Caco-2 (cell line): ENCODE measurements at regions of chr2 and their contacts with region 1.

Region 1: GRCh38 chr2:206159346-206160124 is at the starts of genes EEF1B2 and NDUFS1:
- DNase-seq: peak; percentile 98
- H3K4me3 ChIP-seq: peak within 1 kb of the TSS; percentile 70
- H3K4me3 Mint-ChIP-seq: peak within 1 kb of the TSS; percentile 83
- H3K27ac Mint-ChIP-seq: peak within 1 kb of the TSS; percentile 99
- H3K4me1 ChIP-seq: peaks cover 6% of the 10 kb centered on the region; the same call in 1 of the 2 replicates
- H3K4me1 Mint-ChIP-seq: peaks cover 25% of the 10 kb centered on the region
- H3K27me3 ChIP-seq: no peaks in the 10 kb centered on the region
- H3K27me3 Mint-ChIP-seq: no peaks in the 10 kb centered on the region
- CTCF ChIP-seq: no peak
- total RNA-seq, gene EEF1B2: 939 and 946 TPM in 2 replicates
- total RNA-seq, gene NDUFS1: 123 TPM in 2 replicates

Region 2: GRCh38 chr2:206004004-206004693 is 155.4 kb before region 1 on chr2:
- CTCF ChIA-PET with region 1: interaction called, 3 read pairs
- POLR2A ChIA-PET with region 1: no interaction called
- intact Hi-C with region 1: loop called (anchors 2 kb)
- DNase-seq: peak; percentile 65
- H3K4me3 ChIP-seq: no peak overlapping the region
- H3K4me3 Mint-ChIP-seq: no peak overlapping the region
- H3K27ac Mint-ChIP-seq: no peak overlapping the region
- H3K4me1 ChIP-seq: no peaks in the 10 kb centered on the region
- H3K4me1 Mint-ChIP-seq: no peaks in the 10 kb centered on the region
- H3K27me3 ChIP-seq: no peaks in the 10 kb centered on the region
- H3K27me3 Mint-ChIP-seq: no peaks in the 10 kb centered on the region
- CTCF ChIP-seq: peak; percentile 31 to 78

Region 3: GRCh38 chr2:206085742-206086445 is 73.6 kb before region 1 on chr2 and contains the start of gene INO80D:
- CTCF ChIA-PET with region 1: no interaction called
- POLR2A ChIA-PET with region 1: interaction called, 7 read pairs
- intact Hi-C with region 1: loop called (anchors 2 kb)
- DNase-seq: peak; percentile 87 to 88
- H3K4me3 ChIP-seq: peak within 1 kb of the TSS; percentile 77
- H3K4me3 Mint-ChIP-seq: peak within 1 kb of the TSS; percentile 93
- H3K27ac Mint-ChIP-seq: peak within 1 kb of the TSS; percentile 97
- H3K4me1 ChIP-seq: no peaks in the 10 kb centered on the region
- H3K4me1 Mint-ChIP-seq: peaks cover 18% of the 10 kb centered on the region
- H3K27me3 ChIP-seq: no peaks in the 10 kb centered on the region
- H3K27me3 Mint-ChIP-seq: no peaks in the 10 kb centered on the region
- CTCF ChIP-seq: peak; percentile 48 to 68
- total RNA-seq, gene INO80D: 19.8 and 21.8 TPM in 2 replicates

Region 4: GRCh38 chr2:206260188-206261012 is 100.9 kb after region 1 on chr2:
- CTCF ChIA-PET with region 1: interaction called, 4 read pairs
- POLR2A ChIA-PET with region 1: no interaction called
- intact Hi-C with region 1: loop called (anchors 1 kb)
- DNase-seq: peak in 1 of 2 experiments; percentile 26
- H3K4me3 ChIP-seq: no peak overlapping the region
- H3K4me3 Mint-ChIP-seq: no peak overlapping the region
- H3K27ac Mint-ChIP-seq: no peak overlapping the region
- H3K4me1 ChIP-seq: 0 out of 2 replicates have a peak, but pooled peaks cover 3% of the 10 kb centered on the region
- H3K4me1 Mint-ChIP-seq: no peaks in the 10 kb centered on the region
- H3K27me3 ChIP-seq: 0 out of 2 replicates have a peak, but pooled peaks cover 1% of the 10 kb centered on the region
- H3K27me3 Mint-ChIP-seq: peaks cover 37% of the 10 kb centered on the region
- CTCF ChIP-seq: peak; percentile 55 to 62

Region 5: DNA sequence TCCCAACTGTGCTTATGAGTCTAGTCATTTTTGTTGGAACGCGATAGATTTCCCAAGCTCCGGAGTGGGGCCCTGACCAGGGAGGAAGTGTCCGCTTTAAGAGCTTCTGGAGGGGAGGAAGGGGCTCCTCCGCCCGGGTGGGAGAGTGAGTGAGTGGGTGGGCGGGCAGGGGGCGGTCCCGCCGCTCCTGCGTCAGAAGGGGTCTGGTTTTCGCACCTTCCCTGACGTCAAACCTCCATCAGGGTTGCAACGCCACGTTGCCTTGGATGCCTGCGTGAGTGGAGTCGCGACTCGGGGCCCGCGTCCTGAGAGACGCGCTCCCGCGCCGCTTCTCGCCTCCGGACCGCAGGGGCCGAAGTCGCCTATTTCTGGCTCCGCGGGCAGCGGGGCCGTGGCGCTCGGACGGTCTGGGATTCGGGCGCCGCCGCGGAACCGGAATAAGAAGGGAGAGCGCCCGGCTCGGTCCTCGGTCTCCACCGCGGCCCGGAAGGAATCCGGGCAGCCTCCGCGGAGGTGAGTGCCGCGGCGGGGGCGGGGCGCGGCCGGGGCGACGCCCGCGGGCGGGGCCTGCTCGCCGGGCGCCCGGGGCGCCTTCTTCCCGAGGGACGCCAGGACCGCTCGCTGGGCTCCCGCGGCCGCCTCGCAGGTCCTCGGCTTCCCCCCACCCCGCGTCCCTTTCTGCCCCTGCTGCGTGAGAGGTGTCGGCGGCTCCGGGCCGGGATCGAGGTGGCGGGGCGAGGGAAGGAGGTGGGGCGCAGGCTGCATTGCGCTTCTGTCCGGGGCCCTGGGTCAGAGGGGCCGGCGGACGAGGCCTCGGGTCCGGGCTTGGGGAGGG is 115.1 kb after region 1 on chr2 and contains the start of gene ZDBF2:
- CTCF ChIA-PET with region 1: no interaction called
- POLR2A ChIA-PET with region 1: interaction called, 5 read pairs
- intact Hi-C with region 1: loop called (anchors 5 kb)
- DNase-seq: peak; percentile 52 to 69
- H3K4me3 ChIP-seq: peak within 1 kb of the TSS; percentile 82
- H3K4me3 Mint-ChIP-seq: peak within 1 kb of the TSS; percentile 80
- H3K27ac Mint-ChIP-seq: peak within 1 kb of the TSS; percentile 79
- H3K4me1 ChIP-seq: no peaks in the 10 kb centered on the region
- H3K4me1 Mint-ChIP-seq: peaks cover 7% of the 10 kb centered on the region
- H3K27me3 ChIP-seq: no peaks in the 10 kb centered on the region
- H3K27me3 Mint-ChIP-seq: peaks cover 23% of the 10 kb centered on the region
- CTCF ChIP-seq: no peak
- total RNA-seq, gene ZDBF2: 6.5 and 7.4 TPM in 2 replicates

Region 6: GRCh38 chr2:206392118-206392517 is 232.6 kb after region 1 on chr2:
- CTCF ChIA-PET with region 1: no interaction called
- POLR2A ChIA-PET with region 1: no interaction called
- intact Hi-C with region 1: loop called (anchors 5 kb)
- DNase-seq: peak; percentile 46 to 68
- H3K4me3 ChIP-seq: no peak overlapping the region
- H3K4me3 Mint-ChIP-seq: no peak overlapping the region
- H3K27ac Mint-ChIP-seq: no peak overlapping the region
- H3K4me1 ChIP-seq: no peaks in the 10 kb centered on the region
- H3K4me1 Mint-ChIP-seq: peaks cover 4% of the 10 kb centered on the region
- H3K27me3 ChIP-seq: no peaks in the 10 kb centered on the region
- H3K27me3 Mint-ChIP-seq: no peaks in the 10 kb centered on the region
- CTCF ChIP-seq: peak; percentile 73 to 85

Region 7: GRCh38 chr2:206442833-206443734 is 283.5 kb after region 1 on chr2 and contains the start of gene ADAM23:
- CTCF ChIA-PET with region 1: no interaction called
- POLR2A ChIA-PET with region 1: no interaction called
- intact Hi-C with region 1: loop called (anchors 5 kb)
- DNase-seq: peak; percentile 65 to 73
- H3K4me3 ChIP-seq: peak within 1 kb of the TSS; percentile 78
- H3K4me3 Mint-ChIP-seq: peak within 1 kb of the TSS; percentile 85
- H3K27ac Mint-ChIP-seq: peak within 1 kb of the TSS; percentile 48
- H3K4me1 ChIP-seq: peaks cover 36% of the 10 kb centered on the region
- H3K4me1 Mint-ChIP-seq: peaks cover 21% of the 10 kb centered on the region
- H3K27me3 ChIP-seq: no peaks in the 10 kb centered on the region
- H3K27me3 Mint-ChIP-seq: peaks cover 2% of the 10 kb centered on the region
- CTCF ChIP-seq: peak in 1 of 2 experiments; percentile 31
- total RNA-seq, gene ADAM23: 46.8 and 55.1 TPM in 2 replicates